Prostate gland (tissue), 2 donors: ENCODE measurements at regions of chr19 and their contacts with region 1.

Region 1: DNA sequence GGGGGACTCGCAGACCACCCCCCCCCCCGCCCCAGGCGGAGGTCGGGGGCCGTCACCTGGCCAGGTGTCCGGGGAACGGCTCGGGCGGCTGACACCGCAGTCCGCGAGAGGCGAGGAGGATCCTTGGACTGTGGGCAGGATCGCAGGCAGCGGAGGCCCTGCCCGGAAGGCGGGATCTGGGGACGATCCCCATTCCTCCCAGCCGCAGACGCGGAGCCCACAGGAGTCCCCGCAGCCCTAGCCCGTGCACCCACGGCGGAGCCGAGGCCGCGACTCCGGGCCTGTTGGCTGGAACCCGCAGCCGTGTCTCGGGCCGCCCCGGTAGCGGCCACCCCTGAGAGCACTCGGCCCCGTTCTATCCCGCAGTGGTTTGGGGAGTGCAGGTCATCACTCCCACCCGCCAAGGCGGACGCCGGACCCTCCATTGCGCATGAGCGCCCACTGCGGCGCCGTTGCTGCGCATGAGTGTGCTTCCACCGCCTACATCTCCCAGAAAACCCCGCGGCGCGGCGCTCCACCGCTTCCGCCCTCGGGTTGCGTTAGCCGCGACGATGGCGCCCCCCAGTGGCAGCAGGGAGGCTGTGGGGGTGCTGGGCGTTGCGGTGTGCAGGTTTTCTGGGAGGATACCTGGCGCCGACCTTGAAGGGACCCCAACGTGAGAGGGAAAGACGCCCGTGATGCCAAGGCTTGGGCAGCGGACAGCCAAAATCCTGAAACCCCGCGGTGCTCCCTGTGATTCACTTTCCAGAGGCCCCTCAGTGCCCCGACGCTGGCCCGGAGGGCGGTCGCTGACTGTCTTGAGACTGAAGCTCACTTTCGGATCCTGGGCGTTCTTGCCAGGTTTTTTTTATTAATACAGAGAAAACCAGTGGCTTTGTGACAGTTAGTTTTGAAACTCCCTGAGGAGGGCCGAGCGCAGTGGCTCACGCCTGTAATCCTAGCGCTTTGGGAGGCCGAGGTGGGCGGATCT is 4.4 kb upstream of the ZNF329 start:
- DNase-seq: peak; percentile 95
- H3K4me3 ChIP-seq: peak overlapping the region; percentile 79 to 87
- H3K27ac ChIP-seq: peak overlapping the region; percentile 81 to 89
- H3K4me1 ChIP-seq: peaks cover 5% of the 10 kb centered on the region
- H3K27me3 ChIP-seq: no peaks in the 10 kb centered on the region
- CTCF ChIP-seq: peak; percentile 98 to 100 (median 99)
- POLR2A ChIP-seq: peak; percentile 72

Region 2: DNA sequence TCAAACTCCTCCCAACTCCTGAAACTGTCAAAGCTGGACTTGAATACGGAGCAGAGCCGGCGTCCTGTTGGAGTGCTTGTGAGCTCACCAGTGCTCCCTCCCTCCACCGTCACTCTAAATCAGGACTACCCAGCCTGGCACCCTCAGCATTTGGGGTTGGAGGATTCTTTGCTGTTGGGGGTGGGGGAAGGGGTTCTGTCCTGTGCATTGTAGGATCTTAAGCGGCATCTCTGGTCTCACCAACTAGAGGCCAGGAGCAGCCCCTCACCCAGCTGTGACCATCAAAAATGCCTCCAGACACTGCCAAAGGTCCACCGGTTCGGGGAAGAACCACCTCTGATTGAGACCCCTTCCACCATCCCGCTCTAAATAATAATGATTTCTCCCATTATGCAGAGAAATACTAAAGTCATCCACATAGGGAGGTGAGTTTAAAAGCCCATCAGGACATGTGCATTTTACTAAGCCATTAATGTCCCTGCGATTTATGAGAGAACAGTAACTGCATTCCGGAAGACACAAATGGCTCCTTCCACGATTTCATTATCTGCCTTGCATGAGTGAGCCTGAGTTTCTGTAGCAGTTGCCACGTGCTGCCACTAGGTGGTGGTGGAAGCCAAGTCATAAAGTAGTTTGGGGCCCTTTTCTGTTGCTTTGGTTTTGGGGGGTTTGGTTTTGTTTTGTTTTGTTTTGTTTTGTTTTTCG is 1051.2 kb before region 1 on chr19:
- intact Hi-C with region 1: loop called (anchors 5 kb)
- DNase-seq: peak; percentile 39
- H3K4me3 ChIP-seq: no peak overlapping the region
- H3K27ac ChIP-seq: no peak overlapping the region
- H3K4me1 ChIP-seq: no peaks in the 10 kb centered on the region
- H3K27me3 ChIP-seq: peaks cover 3% of the 10 kb centered on the region
- CTCF ChIP-seq: peak; percentile 63 to 78 (median 70)
- POLR2A ChIP-seq: no peak

Region 3: DNA sequence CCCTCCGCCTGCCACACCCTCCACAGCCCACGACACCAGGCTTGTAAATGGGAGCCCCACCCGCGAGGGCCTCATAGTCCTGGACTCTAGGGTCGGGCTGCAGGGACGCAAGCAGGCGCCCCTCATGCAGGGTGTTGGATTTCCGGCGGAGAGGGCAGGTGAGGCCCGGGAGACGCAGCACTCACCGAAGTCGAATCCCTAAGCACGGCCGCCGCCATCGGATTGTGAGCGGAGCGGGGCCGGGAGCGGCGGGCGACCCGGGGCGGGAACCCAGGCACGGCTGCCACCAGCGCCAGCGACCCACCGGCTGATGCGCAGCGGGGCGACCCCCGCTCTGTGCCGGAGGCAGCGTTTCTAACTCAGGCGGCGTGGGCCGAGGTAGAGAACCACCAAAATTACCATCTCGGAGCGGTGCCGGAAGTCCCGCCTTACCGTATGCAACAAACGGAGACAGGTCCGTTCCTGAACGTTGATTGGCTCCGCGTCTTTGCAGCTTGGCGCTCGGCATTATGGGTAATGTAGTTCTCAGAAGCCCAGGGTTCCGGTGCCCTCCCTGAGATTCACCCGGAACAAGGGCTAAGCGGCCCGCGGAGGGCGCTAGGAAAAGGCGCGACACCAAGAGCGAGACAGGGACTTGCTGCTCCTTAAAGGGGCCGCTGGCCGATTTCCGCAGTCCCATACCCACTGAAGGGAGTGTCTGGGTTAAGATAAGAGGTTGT is 576.3 kb before region 1 on chr19 and contains the start of gene ZNF416:
- intact Hi-C with region 1: loop called (anchors 10 kb)
- DNase-seq: peak; percentile 98
- H3K4me3 ChIP-seq: peak within 1 kb of the TSS; percentile 68 to 95
- H3K27ac ChIP-seq: peak within 1 kb of the TSS; percentile 47 to 65
- H3K4me1 ChIP-seq: peaks cover 4% of the 10 kb centered on the region
- H3K27me3 ChIP-seq: no peaks in the 10 kb centered on the region
- CTCF ChIP-seq: peak in 2 of 4 experiments; percentile 17 to 18
- POLR2A ChIP-seq: peak; percentile 18
- total RNA-seq, gene ZNF416: 4.8 to 5.6 TPM

Region 4: GRCh38 chr19:58002384-58003173 is 152.4 kb before region 1 on chr19 and contains the start of gene ZNF606:
- intact Hi-C with region 1: loop called (anchors 5 kb)
- DNase-seq: peak; percentile 85
- H3K4me3 ChIP-seq: peak within 1 kb of the TSS; percentile 64 to 82
- H3K27ac ChIP-seq: peak within 1 kb of the TSS; percentile 84 to 86
- H3K4me1 ChIP-seq: no peaks in the 10 kb centered on the region
- H3K27me3 ChIP-seq: no peaks in the 10 kb centered on the region
- CTCF ChIP-seq: no peak
- POLR2A ChIP-seq: peak; percentile 63
- total RNA-seq, gene ZNF606: 44.7 to 51.3 TPM

Region 5: DNA sequence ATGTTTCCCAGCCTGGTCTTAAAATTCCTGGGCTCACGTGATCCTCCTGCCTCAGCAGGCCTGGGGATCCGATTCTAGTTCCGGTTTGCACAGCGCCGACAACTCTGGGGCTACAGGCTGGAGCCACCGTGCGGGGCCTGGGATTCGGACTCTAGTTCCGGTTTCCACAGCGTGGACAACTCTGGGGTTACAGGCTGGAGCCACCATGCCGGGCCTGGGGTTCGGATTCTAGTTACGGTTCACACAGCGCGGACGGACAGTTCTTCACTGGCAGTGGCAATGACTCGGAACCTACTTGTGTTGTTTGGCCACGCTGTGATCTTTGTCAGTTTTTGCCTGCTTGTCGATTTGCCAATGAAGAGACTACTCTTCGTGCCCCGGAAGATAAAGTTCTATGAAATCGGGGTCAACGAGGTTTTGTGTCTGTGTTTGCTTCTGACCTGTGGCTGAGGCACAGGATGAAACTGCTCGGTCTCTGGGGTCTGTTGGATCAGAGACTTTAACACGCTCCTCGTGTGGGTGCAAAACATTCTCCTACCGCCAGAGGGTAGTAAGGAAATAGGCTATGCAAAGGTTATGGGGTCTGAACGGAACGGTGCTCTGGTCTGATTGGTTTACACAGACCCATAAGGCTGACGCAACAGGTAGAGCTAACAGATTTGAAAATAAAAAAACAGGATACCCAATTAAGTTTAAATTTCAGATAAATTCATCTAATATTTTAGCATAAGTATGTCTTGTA is 133.3 kb before region 1 on chr19:
- intact Hi-C with region 1: loop called (anchors 1 kb)
- DNase-seq: peak; percentile 50
- H3K4me3 ChIP-seq: no peak overlapping the region
- H3K27ac ChIP-seq: no peak overlapping the region
- H3K4me1 ChIP-seq: no peaks in the 10 kb centered on the region
- H3K27me3 ChIP-seq: no peaks in the 10 kb centered on the region
- CTCF ChIP-seq: peak; percentile 40 to 63 (median 60)
- POLR2A ChIP-seq: no peak